ENCODE measurements at regions of chr3 and their contacts with region 1.

Region 1: DNA sequence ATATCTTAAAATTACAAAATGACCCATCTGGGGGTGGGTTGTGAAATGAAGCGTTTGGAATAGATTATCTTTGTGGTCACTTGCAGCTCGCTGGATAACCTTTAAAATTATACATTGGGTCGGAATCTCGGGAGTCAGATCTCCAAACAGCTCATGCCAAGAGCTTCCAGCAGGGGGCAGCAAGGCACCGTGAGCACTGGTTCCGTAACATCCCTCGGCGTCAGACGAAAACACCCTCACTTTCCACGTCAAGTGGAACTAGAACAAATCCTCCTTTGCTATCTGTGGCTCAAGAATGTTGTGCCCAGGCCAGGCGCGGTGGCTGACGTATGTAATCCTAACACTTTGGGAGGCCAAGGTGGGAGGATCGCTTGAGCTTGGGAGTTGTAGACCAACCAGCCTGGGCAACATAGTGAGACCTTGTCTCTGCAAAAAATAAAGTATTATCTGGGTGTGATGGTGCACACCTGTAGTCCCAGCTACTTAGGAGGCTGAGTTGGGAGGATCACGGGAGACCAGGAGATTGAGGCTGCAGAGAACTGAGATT is 31.1 kb downstream of the UMPS start:
- DNase-seq: peak; percentile 64 to 97 (median 88)

Region 2: GRCh38 chr3:124905849-124906248 is 144.5 kb after region 1 on chr3:
- intact Hi-C with region 1: loop called (anchors 1 kb)
- DNase-seq: no peak

Region 3: GRCh38 chr3:124986158-124987143 is 225.1 kb after region 1 on chr3:
- intact Hi-C with region 1: loop called (anchors 10 kb)
- DNase-seq: peak in 1 of 10 donors; percentile 18

Region 4: GRCh38 chr3:125585595-125586223 is 824.4 kb after region 1 on chr3:
- intact Hi-C with region 1: loop called (anchors 10 kb)
- DNase-seq: peak in 5 of 10 donors; percentile 16 to 66 (median 62)

Measured in posterior cingulate gyrus (tissue), 11 donors.